PC-3 (cell line): ENCODE measurements at regions of chr10 and their contacts with region 1.

Region 1: DNA sequence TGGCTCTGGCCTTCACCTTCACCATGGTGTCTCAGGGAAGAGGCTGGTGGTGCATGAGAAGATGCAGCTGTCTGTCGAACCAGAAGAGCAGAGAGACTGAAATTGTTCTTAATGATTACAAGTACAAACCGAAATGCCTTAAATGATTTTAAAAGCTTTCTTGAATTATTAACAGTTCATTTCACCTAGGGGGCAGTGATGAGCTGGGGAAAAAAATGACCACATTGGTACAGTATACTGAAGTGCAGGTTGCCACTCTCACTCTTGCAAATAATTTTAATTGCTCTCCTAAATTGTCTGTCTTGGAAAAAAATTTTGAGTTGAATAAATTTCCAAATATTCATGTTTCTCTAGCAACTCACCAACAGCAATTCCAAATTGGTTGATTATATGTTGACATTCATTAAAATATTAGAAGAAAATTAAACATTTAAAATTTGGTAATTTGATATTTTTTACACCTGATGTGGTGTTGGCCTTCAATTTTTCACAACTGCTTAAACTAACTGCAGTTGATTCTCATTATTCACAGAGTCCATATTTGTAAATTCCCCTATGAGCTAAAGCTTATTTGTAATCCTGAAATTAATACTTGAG is 692.6 kb downstream of the ZWINT start:
- DNase-seq: peak; percentile 76
- ATAC-seq: peak; percentile 81
- H3K4me3 ChIP-seq: no peak overlapping the region
- H3K27ac ChIP-seq: no peak overlapping the region
- H3K4me1 ChIP-seq: no peaks in the 10 kb centered on the region
- H3K27me3 ChIP-seq: no peaks in the 10 kb centered on the region
- CTCF ChIP-seq: peak; percentile 84

Region 2: DNA sequence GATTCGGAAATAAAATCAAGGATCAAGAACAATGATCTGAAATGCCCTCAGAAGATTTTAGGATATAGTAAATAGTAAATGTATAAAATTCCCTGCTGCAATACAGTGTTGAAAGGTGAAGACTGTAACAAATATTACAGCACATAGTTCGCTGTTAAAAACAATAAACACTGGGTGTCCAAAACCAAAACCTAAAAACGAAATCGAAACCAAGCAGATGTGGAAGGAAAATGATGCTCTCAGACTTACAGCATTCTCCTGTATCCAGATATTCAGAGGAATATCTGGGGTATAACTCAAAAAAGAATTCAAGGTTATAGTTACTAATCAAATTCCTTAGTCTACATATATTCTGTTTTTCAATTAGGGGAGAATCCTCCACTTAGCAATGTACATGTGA is 159.3 kb before region 1 on chr10:
- CTCF ChIA-PET with region 1: no interaction called
- POLR2A ChIA-PET with region 1: no interaction called
- intact Hi-C with region 1: no loop called
- DNase-seq: peak; percentile 33
- ATAC-seq: peak; percentile 66
- H3K4me3 ChIP-seq: peak overlapping the region; percentile 66
- H3K27ac ChIP-seq: no peak overlapping the region
- H3K4me1 ChIP-seq: no peaks in the 10 kb centered on the region
- H3K27me3 ChIP-seq: no peaks in the 10 kb centered on the region
- CTCF ChIP-seq: no peak

Region 3: GRCh38 chr10:55734112-55734511 is 65.7 kb after region 1 on chr10:
- CTCF ChIA-PET with region 1: no interaction called
- POLR2A ChIA-PET with region 1: no interaction called
- intact Hi-C with region 1: loop called (anchors 5 kb)
- DNase-seq: no peak
- ATAC-seq: no peak
- H3K4me3 ChIP-seq: no peak overlapping the region
- H3K27ac ChIP-seq: no peak overlapping the region
- H3K4me1 ChIP-seq: no peaks in the 10 kb centered on the region
- H3K27me3 ChIP-seq: no peaks in the 10 kb centered on the region
- CTCF ChIP-seq: no peak

Region 4: DNA sequence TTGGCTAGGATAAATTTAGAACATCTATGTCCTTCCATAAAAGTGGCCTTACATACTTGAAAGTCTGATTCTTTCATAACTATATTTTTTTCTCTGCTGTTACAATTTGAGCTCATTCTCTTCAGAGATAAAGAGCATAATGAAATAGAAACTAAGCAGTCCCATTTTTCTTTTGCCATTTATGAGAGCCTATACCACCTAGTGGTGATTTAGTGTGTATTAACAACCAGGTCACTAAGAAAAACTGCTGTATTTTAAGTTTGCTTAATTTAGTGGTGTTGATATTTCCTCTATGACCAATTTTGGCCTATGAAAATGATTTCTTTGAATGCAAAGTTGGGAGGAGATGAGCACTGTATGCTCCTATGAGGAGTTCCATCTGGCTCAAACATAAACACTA is 781.3 kb after region 1 on chr10:
- CTCF ChIA-PET with region 1: no interaction called
- POLR2A ChIA-PET with region 1: no interaction called
- intact Hi-C with region 1: loop called (anchors 10 kb)
- DNase-seq: peak; percentile 53
- ATAC-seq: peak; percentile 91
- H3K4me3 ChIP-seq: no peak overlapping the region
- H3K27ac ChIP-seq: no peak overlapping the region
- H3K4me1 ChIP-seq: no peaks in the 10 kb centered on the region
- H3K27me3 ChIP-seq: no peaks in the 10 kb centered on the region
- CTCF ChIP-seq: peak; percentile 86